Endothelial cell of umbilical vein (primary cell): ENCODE measurements at regions of chr14 and their contacts with region 1.

Region 1: GRCh38 chr14:55026793-55027561 is at the starts of genes SOCS4 and WDHD1:
- DNase-seq: peak; percentile 97
- H3K4me3 ChIP-seq: peak within 1 kb of the TSS; percentile 68 to 96 (median 86)
- H3K27ac ChIP-seq: peak within 1 kb of the TSS; percentile 61
- H3K4me1 ChIP-seq: peaks cover 30% of the 10 kb centered on the region
- H3K27me3 ChIP-seq: no peaks in the 10 kb centered on the region
- CTCF ChIP-seq: no peak
- POLR2A ChIP-seq: peak; percentile 77
- total RNA-seq, gene SOCS4: 26.7 and 28.7 TPM in 2 replicates
- total RNA-seq, gene WDHD1: 22.5 TPM in 2 replicates

Region 2: GRCh38 chr14:54902521-54903420 is 124.2 kb before region 1 on chr14 and contains the start of gene GCH1:
- CTCF ChIA-PET with region 1: no interaction called
- POLR2A ChIA-PET with region 1: no interaction called
- dilution Hi-C with region 1: no loop called
- intact Hi-C with region 1: loop called (anchors 5 kb)
- DNase-seq: peak; percentile 70
- H3K4me3 ChIP-seq: peak within 1 kb of the TSS; percentile 71 to 97 (median 86)
- H3K27ac ChIP-seq: peak within 1 kb of the TSS; percentile 16
- H3K4me1 ChIP-seq: peaks cover 5% of the 10 kb centered on the region
- H3K27me3 ChIP-seq: no peaks in the 10 kb centered on the region
- CTCF ChIP-seq: peak; percentile 35 to 54
- POLR2A ChIP-seq: peak; percentile 46
- total RNA-seq, gene GCH1: 4.6 and 5.0 TPM in 2 replicates

Region 3: DNA sequence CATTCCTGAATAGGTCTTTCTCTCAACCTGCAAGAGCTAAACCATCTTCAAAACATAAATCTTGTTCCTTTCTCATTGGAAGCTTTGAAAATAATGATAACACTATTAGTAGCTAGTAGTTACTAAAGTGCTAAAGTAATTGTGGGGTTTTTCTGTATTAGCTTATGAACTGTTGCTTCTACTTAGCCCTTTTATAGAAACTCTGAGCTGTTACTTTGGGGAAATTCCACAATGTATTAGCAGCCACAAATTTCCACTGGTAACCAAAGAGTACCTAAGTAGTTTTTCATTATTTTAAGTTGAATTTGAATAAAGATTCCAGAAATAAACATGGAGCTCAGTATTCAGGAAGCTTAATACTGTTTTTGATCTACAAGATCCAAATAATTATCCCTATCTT is 18.1 kb after region 1 on chr14:
- CTCF ChIA-PET with region 1: interaction called, 5 read pairs
- POLR2A ChIA-PET with region 1: no interaction called
- dilution Hi-C with region 1: no loop called
- intact Hi-C with region 1: loop called (anchors 1 kb)
- DNase-seq: no peak
- H3K4me3 ChIP-seq: no peak overlapping the region
- H3K27ac ChIP-seq: no peak overlapping the region
- H3K4me1 ChIP-seq: no peaks in the 10 kb centered on the region
- H3K27me3 ChIP-seq: no peaks in the 10 kb centered on the region
- CTCF ChIP-seq: no peak
- POLR2A ChIP-seq: no peak

Region 4: DNA sequence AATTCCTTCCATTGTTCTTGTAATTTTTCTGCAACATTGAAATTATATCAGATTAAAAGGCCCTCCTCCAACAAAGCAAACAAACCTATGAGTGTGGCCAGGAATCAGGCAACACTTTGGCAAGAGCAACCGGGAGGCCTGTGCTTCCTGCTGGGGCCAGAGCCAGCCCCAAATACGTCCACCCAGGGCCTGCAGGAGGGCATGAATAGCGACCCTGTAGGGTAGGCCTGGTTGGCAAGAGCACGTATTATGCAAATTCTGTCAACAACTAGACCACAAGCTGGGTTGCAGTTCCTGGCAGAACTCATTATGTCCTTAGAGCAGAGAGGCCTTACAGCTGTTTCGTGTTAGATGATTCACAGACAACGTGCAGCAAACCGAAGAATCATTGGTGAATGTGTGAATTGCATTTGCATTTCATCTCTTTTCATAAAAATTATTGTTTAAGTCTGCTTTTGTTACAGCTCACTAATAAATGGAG is 75.2 kb after region 1 on chr14:
- CTCF ChIA-PET with region 1: no interaction called
- POLR2A ChIA-PET with region 1: no interaction called
- dilution Hi-C with region 1: no loop called
- intact Hi-C with region 1: loop called (anchors 2 kb)
- DNase-seq: peak; percentile 98
- H3K4me3 ChIP-seq: no peak overlapping the region
- H3K27ac ChIP-seq: peak overlapping the region; percentile 98
- H3K4me1 ChIP-seq: peaks cover 26% of the 10 kb centered on the region
- H3K27me3 ChIP-seq: no peaks in the 10 kb centered on the region
- CTCF ChIP-seq: no peak
- POLR2A ChIP-seq: peak; percentile 58